Prostate gland (tissue), 2 donors: ENCODE measurements at regions of chr10 and their contacts with region 1.

Region 1: GRCh38 chr10:59906417-59907202 is at the start of gene CCDC6:
- DNase-seq: peak; percentile 93
- H3K4me3 ChIP-seq: peak within 1 kb of the TSS; percentile 67 to 94
- H3K27ac ChIP-seq: peak within 1 kb of the TSS; percentile 90 to 92
- H3K4me1 ChIP-seq: no peaks in the 10 kb centered on the region
- H3K27me3 ChIP-seq: no peaks in the 10 kb centered on the region
- CTCF ChIP-seq: peak; percentile 62 to 93 (median 78)
- POLR2A ChIP-seq: peak; percentile 93
- total RNA-seq, gene CCDC6: 48.1 to 65.0 TPM

Region 2: DNA sequence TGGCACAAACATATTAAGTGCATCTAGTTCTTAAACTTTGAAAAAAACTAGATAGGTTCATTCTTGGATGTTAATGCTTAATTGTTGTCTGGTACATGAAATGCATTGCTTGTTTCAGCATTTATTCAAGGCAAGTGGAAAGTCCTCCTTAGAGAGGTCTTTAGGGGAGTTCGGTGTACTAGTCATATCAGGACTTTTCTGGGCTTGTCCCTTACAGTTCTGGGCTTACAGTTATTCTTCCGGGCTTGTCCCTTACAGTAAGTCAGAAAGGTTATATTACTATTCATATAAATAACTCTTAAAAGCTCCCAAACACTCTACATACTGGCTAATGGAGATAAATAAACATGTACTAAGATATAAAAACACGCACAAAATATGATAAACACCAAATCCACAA is 91.7 kb before region 1 on chr10:
- intact Hi-C with region 1: loop called (anchors 5 kb)
- DNase-seq: no peak
- H3K4me3 ChIP-seq: no peak overlapping the region
- H3K27ac ChIP-seq: no peak overlapping the region
- H3K4me1 ChIP-seq: no peaks in the 10 kb centered on the region
- H3K27me3 ChIP-seq: no peaks in the 10 kb centered on the region
- CTCF ChIP-seq: no peak
- POLR2A ChIP-seq: no peak

Region 3: DNA sequence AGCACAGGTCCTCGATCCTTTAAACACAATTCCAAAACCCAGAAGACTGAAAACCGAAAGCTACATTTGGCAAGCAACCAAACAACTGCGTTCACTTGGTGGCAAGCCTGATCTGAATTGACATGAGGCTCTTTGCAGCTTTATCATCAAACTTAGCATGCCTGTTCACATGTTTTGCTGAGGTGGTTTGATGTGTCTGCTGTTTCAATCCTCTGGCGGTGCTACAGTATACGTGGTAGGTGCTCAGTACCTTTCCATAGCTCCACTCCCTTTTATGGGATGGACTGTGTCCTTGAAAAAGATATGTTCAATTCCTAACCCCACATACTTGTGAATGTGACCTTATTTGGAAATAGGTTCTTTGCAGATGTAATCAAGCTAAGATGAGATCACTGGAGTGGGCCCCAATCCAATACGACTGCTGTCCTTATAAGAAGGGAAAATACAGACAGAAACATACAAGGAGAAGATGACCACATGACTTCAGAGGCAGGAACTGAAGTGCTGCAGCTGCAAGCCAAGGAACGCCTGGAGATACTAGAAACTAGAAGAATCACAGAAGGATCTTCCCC is 33.6 kb before region 1 on chr10:
- intact Hi-C with region 1: loop called (anchors 5 kb)
- DNase-seq: peak; percentile 66
- H3K4me3 ChIP-seq: no peak overlapping the region
- H3K27ac ChIP-seq: peak overlapping the region; percentile 60 to 65
- H3K4me1 ChIP-seq: no peaks in the 10 kb centered on the region
- H3K27me3 ChIP-seq: no peaks in the 10 kb centered on the region
- CTCF ChIP-seq: no peak
- POLR2A ChIP-seq: no peak

Region 4: GRCh38 chr10:60044242-60044641 is 137.6 kb after region 1 on chr10:
- intact Hi-C with region 1: loop called (anchors 5 kb)
- DNase-seq: no peak
- H3K4me3 ChIP-seq: no peak overlapping the region
- H3K27ac ChIP-seq: no peak overlapping the region
- H3K4me1 ChIP-seq: no peaks in the 10 kb centered on the region
- H3K27me3 ChIP-seq: no peaks in the 10 kb centered on the region
- CTCF ChIP-seq: no peak
- POLR2A ChIP-seq: no peak